Mammary epithelial cell (primary cell): ENCODE measurements at regions of chr2 and their contacts with region 1.

Region 1: DNA sequence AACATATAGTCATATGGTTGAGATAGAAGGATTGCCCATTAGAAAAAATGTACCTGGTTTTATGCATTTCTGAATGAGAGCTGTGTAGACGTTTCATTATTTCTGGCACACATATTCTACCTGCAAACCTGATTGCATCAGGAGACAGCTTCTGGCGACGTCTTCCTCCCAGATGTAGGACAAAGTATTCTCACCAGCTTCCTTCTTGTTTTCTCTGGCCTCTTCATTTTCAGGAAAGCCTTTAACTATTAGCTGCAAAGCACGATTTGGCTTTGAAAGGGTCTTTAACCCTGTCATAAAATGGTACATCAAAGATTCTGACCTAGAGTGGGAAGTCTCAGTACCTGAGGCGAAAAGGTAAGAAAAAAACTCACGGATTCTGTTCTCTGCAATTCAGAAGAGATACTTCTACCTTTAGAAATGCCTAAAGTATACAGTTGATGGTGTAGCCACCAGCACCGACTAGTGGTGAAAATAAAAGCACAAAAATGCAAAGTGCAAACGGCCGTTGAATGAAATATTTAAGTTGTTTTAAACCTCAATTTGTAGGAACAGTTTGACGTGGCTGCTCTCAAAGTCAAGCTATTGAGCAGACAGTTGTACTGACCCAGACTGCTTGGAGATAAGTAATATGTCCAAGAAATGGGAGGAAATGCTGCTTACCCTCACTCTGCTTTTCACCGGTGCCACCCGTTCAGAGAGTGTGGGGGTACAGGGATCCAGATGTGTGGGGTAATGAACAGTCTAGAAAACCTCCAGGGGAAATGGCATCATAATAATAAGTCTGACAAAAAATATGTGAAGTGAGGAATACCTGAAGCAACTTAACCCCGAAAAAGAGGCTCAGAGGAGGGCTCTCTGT is 20.2 kb downstream of the IL18RAP start:
- DNase-seq: peak; percentile 35
- H3K4me3 ChIP-seq: no peak overlapping the region
- H3K27ac ChIP-seq: no peak overlapping the region
- H3K4me1 ChIP-seq: peaks cover 11% of the 10 kb centered on the region
- H3K27me3 ChIP-seq: no peaks in the 10 kb centered on the region
- CTCF ChIP-seq: peak; percentile 72 to 78

Region 2: DNA sequence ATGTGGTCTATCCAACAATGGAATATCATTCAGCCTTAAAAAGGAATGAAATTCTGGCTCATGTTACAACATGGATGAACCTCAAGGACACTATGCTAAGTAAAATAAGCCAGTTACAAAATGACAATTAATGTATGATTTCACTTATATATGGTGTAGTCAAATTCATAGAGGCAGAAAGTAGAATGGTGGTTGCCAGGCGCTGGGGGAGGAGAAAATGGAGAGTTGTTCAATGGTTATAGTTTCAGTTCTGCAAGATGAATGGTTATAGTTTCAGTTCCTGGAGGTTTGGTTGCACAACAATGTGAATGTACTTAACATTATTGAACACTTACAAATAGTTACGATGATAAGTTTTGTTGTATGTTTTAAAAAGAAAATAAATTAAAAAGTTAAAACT is 530.7 kb before region 1 on chr2:
- CTCF ChIA-PET with region 1: no interaction called
- dilution Hi-C with region 1: no loop called
- in situ Hi-C with region 1: loop called in 1 of 2 experiments (anchors 25 kb)
- intact Hi-C with region 1: no loop called
- DNase-seq: no peak
- H3K4me3 ChIP-seq: no peak overlapping the region
- H3K27ac ChIP-seq: no peak overlapping the region
- H3K4me1 ChIP-seq: no peaks in the 10 kb centered on the region
- H3K27me3 ChIP-seq: no peaks in the 10 kb centered on the region
- CTCF ChIP-seq: no peak

Region 3: GRCh38 chr2:102187496-102188150 is 255.6 kb before region 1 on chr2:
- CTCF ChIA-PET with region 1: no interaction called
- dilution Hi-C with region 1: no loop called
- in situ Hi-C with region 1: no loop called
- intact Hi-C with region 1: loop called (anchors 5 kb)
- DNase-seq: peak; percentile 16
- H3K4me3 ChIP-seq: peak overlapping the region; percentile 13 to 44 (median 41)
- H3K27ac ChIP-seq: peak overlapping the region; percentile 14
- H3K4me1 ChIP-seq: peaks cover 28% of the 10 kb centered on the region
- H3K27me3 ChIP-seq: no peaks in the 10 kb centered on the region
- CTCF ChIP-seq: no peak

Region 4: DNA sequence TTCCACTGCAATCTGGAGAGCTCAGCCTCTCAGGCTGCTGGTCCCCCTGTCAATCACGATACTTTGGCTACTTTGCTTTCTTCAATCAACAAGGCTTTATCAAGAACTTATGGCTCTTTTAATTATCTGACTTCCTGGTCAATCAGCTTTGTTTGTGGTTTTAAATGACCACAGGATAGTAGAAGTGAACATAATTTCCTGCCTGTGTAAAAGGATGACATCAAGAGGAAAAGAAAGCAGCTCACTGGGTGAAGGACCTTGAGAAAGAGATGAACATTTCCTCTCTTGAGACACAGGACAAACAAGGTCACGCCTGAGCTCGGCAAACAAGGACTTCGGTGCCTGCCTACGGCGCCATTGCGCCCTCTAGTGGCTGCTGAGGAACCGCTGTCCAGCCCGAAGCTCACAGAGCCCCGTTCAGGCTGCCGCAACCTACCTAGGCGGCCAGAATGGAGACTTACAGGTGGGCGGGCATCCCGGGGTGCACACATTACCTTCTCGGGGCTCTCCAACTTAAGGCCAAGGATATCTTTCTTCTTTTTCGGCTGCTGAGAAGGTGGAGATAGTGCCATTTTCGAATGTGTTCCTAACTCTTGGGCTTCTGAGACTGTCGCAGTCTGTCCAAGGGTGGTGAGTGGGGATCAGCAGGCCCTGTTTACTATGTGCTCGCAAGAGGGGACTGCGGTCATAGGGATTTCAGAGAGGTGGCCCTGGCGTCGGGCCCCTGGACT is 202.4 kb before region 1 on chr2:
- CTCF ChIA-PET with region 1: interaction called, 21 read pairs
- dilution Hi-C with region 1: no loop called
- in situ Hi-C with region 1: loop called in 1 of 2 experiments (anchors 10 kb)
- intact Hi-C with region 1: loop called (anchors 1 kb)
- DNase-seq: peak; percentile 77
- H3K4me3 ChIP-seq: no peak overlapping the region
- H3K27ac ChIP-seq: peak overlapping the region; percentile 32
- H3K4me1 ChIP-seq: peaks cover 20% of the 10 kb centered on the region
- H3K27me3 ChIP-seq: no peaks in the 10 kb centered on the region
- CTCF ChIP-seq: peak; percentile 91 to 99

Region 5: GRCh38 chr2:102301867-102302362 is 141.3 kb before region 1 on chr2:
- CTCF ChIA-PET with region 1: no interaction called
- dilution Hi-C with region 1: no loop called
- in situ Hi-C with region 1: no loop called
- intact Hi-C with region 1: loop called (anchors 1 kb)
- DNase-seq: peak; percentile 29
- H3K4me3 ChIP-seq: no peak overlapping the region
- H3K27ac ChIP-seq: no peak overlapping the region
- H3K4me1 ChIP-seq: no peaks in the 10 kb centered on the region
- H3K27me3 ChIP-seq: peaks cover 4% of the 10 kb centered on the region
- CTCF ChIP-seq: peak; percentile 36 to 65

Region 6: GRCh38 chr2:102337012-102337411 is 106.2 kb before region 1 on chr2:
- CTCF ChIA-PET with region 1: no interaction called
- dilution Hi-C with region 1: no loop called
- in situ Hi-C with region 1: no loop called
- intact Hi-C with region 1: no loop called
- DNase-seq: no peak
- H3K4me3 ChIP-seq: no peak overlapping the region
- H3K27ac ChIP-seq: peak overlapping the region; percentile 48
- H3K4me1 ChIP-seq: peaks cover 18% of the 10 kb centered on the region
- H3K27me3 ChIP-seq: no peaks in the 10 kb centered on the region
- CTCF ChIP-seq: no peak